Panc1 (cell line): ENCODE measurements at regions of chr11 and their contacts with region 1.

Region 1: DNA sequence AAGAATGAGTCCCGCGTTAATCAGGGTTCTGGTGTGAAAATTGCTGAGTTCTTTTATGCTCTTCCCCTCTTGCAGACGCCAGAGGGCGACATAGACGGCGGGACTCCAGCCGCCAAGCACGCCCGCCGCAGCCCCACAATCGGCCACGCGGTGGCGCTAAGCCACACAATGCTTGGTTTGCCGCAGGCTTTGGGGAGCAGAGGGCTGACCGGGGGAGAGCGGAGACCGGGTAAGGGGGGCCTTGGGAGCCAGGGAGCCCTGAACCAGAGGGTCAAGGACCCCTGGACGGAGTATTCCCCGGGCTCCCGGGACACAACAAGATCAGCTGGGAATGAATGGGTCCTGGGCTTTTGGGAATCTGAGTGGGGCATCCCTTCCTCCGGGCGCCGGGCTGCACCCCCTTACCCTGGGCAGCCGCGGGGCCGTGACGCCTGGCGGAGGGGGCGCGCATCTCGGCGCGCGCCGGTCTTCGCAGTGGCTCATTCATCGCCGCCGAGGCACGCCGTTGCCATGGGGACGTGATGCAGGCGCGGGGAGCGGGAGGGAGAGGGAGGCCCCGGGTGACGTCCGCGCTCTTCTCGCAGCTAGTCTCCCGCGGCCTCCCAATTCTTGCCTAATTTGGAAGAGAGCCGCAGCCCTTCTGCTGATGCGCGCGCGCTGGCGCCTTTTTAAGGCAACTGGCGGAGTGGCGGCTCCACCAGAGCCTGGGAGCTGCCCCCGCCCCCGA is 12.2 kb upstream of the NPAS4 start:
- DNase-seq: no peak
- ATAC-seq: peak; percentile 91
- H3K4me3 ChIP-seq: peak overlapping the region; percentile 40 to 54
- H3K27ac ChIP-seq: no peak overlapping the region
- H3K4me1 ChIP-seq: no peaks in the 10 kb centered on the region
- H3K27me3 ChIP-seq: peaks cover 24% of the 10 kb centered on the region
- CTCF ChIP-seq: peak; percentile 100

Region 2: DNA sequence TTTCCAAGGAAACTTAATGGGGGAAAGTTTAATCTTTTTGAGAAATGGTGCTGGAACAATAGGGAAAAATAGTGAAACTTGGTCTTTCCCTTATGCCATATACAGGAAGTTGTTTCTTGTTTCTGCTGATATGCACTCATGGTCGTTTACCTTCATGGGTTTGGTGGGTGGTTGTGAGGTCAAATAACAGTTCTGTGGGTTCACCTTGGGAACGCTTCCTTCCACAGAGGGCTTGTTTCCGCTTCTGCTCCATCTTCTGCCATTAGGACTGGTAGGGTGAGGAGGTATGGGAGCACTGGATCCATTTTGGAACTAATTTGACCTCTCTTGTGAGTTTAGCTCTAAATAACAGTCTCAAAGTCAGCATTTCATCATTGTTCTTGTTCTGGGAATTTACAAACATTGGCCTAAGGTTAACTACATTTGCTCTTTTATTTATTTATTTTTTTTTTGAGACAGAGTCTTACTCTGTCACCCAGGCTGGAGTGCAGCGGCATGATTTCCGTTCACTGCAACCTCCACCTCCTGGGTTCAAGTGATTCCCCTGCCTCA is 728.4 kb before region 1 on chr11:
- CTCF ChIA-PET with region 1: no interaction called
- POLR2A ChIA-PET with region 1: no interaction called
- in situ Hi-C with region 1: no loop called
- intact Hi-C with region 1: no loop called
- DNase-seq: no peak
- ATAC-seq: no peak
- H3K4me3 ChIP-seq: no peak overlapping the region
- H3K27ac ChIP-seq: no peak overlapping the region
- H3K4me1 ChIP-seq: no peaks in the 10 kb centered on the region
- H3K27me3 ChIP-seq: no peaks in the 10 kb centered on the region
- CTCF ChIP-seq: no peak

Region 3: GRCh38 chr11:66386171-66387069 is 22.2 kb before region 1 on chr11:
- CTCF ChIA-PET with region 1: interaction called, 10 read pairs
- POLR2A ChIA-PET with region 1: no interaction called
- in situ Hi-C with region 1: no loop called
- intact Hi-C with region 1: no loop called
- DNase-seq: peak; percentile 81
- ATAC-seq: peak; percentile 91
- H3K4me3 ChIP-seq: peak overlapping the region; percentile 24 to 40
- H3K27ac ChIP-seq: peak overlapping the region; percentile 48; the same call in 1 of the 2 replicates
- H3K4me1 ChIP-seq: 0 out of 2 replicates have a peak, but pooled peaks cover 5% of the 10 kb centered on the region
- H3K27me3 ChIP-seq: no peaks in the 10 kb centered on the region
- CTCF ChIP-seq: peak; percentile 97

Region 4: GRCh38 chr11:66421492-66422205 is 13.0 kb after region 1 on chr11:
- CTCF ChIA-PET with region 1: interaction called, 11 read pairs
- POLR2A ChIA-PET with region 1: no interaction called
- in situ Hi-C with region 1: no loop called
- intact Hi-C with region 1: no loop called
- DNase-seq: no peak
- ATAC-seq: peak; percentile 52; the same call in 1 of the 2 replicates
- H3K4me3 ChIP-seq: no peak overlapping the region
- H3K27ac ChIP-seq: no peak overlapping the region
- H3K4me1 ChIP-seq: 0 out of 2 replicates have a peak, but pooled peaks cover 4% of the 10 kb centered on the region
- H3K27me3 ChIP-seq: peaks cover 22% of the 10 kb centered on the region
- CTCF ChIP-seq: no peak

Region 5: GRCh38 chr11:66429983-66430602 is 21.4 kb after region 1 on chr11:
- CTCF ChIA-PET with region 1: interaction called, 18 read pairs
- POLR2A ChIA-PET with region 1: interaction called, 5 read pairs
- in situ Hi-C with region 1: no loop called
- intact Hi-C with region 1: loop called (anchors 1 kb)
- DNase-seq: peak; percentile 45
- ATAC-seq: peak; percentile 94
- H3K4me3 ChIP-seq: no peak overlapping the region
- H3K27ac ChIP-seq: no peak overlapping the region
- H3K4me1 ChIP-seq: no peaks in the 10 kb centered on the region
- H3K27me3 ChIP-seq: no peaks in the 10 kb centered on the region
- CTCF ChIP-seq: peak; percentile 97

Region 6: GRCh38 chr11:66466225-66467027 is 57.8 kb after region 1 on chr11 and contains the start of gene PELI3:
- CTCF ChIA-PET with region 1: interaction called, 4 read pairs
- POLR2A ChIA-PET with region 1: interaction called, 10 read pairs
- in situ Hi-C with region 1: no loop called
- intact Hi-C with region 1: no loop called
- DNase-seq: no peak
- ATAC-seq: peak; percentile 97
- H3K4me3 ChIP-seq: peak within 1 kb of the TSS; percentile 70 to 82
- H3K27ac ChIP-seq: peak within 1 kb of the TSS; percentile 77
- H3K4me1 ChIP-seq: peaks cover 11% of the 10 kb centered on the region
- H3K27me3 ChIP-seq: no peaks in the 10 kb centered on the region
- CTCF ChIP-seq: no peak
- total RNA-seq, gene PELI3: 9.1 TPM

Region 7: GRCh38 chr11:66480117-66480938 is 71.7 kb after region 1 on chr11 and contains the start of gene DPP3:
- CTCF ChIA-PET with region 1: interaction called, 3 read pairs
- POLR2A ChIA-PET with region 1: no interaction called
- in situ Hi-C with region 1: no loop called
- intact Hi-C with region 1: loop called (anchors 2 kb)
- DNase-seq: peak; percentile 90
- ATAC-seq: peak; percentile 95
- H3K4me3 ChIP-seq: peak within 1 kb of the TSS; percentile 77 to 90
- H3K27ac ChIP-seq: peak within 1 kb of the TSS; percentile 95
- H3K4me1 ChIP-seq: peaks cover 4% of the 10 kb centered on the region
- H3K27me3 ChIP-seq: no peaks in the 10 kb centered on the region
- CTCF ChIP-seq: no peak
- total RNA-seq, gene DPP3: 180 TPM

Region 8: GRCh38 chr11:66677599-66678375 is 269.1 kb after region 1 on chr11 and contains the start of gene RBM4B:
- CTCF ChIA-PET with region 1: no interaction called
- POLR2A ChIA-PET with region 1: no interaction called
- in situ Hi-C with region 1: no loop called
- intact Hi-C with region 1: loop called (anchors 1 kb)
- DNase-seq: peak; percentile 77
- ATAC-seq: peak; percentile 98
- H3K4me3 ChIP-seq: peak within 1 kb of the TSS; percentile 64 to 92
- H3K27ac ChIP-seq: peak within 1 kb of the TSS; percentile 91
- H3K4me1 ChIP-seq: peaks cover 20% of the 10 kb centered on the region
- H3K27me3 ChIP-seq: no peaks in the 10 kb centered on the region
- CTCF ChIP-seq: no peak
- total RNA-seq, gene RBM4B: 33.6 TPM